ENCODE measurements at regions of chr3 and their contacts with region 1.

Region 1: DNA sequence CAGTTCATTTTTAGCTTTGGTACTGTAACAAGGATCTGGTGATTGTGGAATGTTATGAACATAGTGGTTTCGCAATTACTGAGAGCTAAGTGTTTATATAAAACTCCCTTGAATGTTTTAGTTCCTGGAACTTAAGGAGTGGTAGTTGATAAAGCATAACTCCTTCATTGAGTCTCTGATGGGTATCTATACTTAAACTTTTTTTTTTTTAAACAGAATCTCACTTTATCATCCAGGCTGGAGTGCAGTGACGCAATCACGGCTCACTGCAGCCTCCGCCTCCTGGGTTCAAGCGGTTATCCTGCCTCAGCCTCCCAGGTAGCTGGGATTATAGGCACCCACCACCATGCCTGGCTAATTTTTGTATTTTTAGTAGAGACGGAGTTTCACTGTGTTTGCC is 11.3 kb downstream of the PRKCI start:
- DNase-seq: peak; percentile 54
- H3K4me3 Mint-ChIP-seq: no peak overlapping the region
- H3K27ac Mint-ChIP-seq: peak overlapping the region; percentile 86
- H3K4me1 Mint-ChIP-seq: peaks cover 7% of the 10 kb centered on the region
- H3K27me3 Mint-ChIP-seq: no peaks in the 10 kb centered on the region
- CTCF ChIP-seq: no peak

Region 2: DNA sequence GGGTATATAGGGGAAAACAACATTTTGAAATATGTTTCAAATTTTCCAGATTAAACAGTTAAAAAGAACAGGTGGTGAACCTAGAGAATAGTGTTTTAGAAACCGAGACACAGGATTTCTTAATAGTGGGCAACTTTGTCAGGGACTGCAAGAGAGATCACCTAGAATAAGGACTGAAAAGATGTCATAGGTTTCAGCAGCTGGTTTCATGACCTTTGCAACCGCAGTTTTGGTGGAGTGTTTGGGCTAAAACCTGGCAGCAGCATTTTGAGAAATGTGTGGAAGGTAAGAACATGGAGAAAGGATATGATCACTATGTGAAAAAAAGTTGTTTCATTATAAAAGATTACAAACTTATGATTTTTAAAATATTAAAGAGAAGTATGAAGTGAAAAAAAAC is 23.6 kb after region 1 on chr3:
- CTCF ChIA-PET with region 1: interaction called, 5 read pairs
- POLR2A ChIA-PET with region 1: interaction called, 18 read pairs
- intact Hi-C with region 1: no loop called
- DNase-seq: no peak
- H3K4me3 Mint-ChIP-seq: no peak overlapping the region
- H3K27ac Mint-ChIP-seq: no peak overlapping the region
- H3K4me1 Mint-ChIP-seq: peaks cover 14% of the 10 kb centered on the region
- H3K27me3 Mint-ChIP-seq: no peaks in the 10 kb centered on the region
- CTCF ChIP-seq: no peak

Region 3: DNA sequence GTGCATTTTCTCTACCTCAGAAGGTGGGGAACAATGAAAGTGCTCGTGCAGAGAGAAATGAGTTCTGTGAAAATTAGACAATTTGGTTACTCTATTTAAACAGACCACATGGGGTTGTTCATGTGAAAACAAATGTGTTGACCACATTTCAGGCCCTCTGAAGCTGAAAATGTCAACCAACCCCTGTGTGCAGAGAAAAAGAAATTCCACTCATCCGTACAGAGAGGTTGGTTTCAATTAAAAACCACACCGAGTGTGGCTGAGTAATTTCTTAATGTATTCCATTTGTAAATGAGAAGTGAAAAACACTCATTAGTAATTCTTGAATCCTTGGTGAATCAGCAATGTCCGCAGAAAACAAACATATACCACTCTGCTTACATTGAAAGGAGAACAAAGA is 399.2 kb after region 1 on chr3:
- CTCF ChIA-PET with region 1: no interaction called
- POLR2A ChIA-PET with region 1: no interaction called
- intact Hi-C with region 1: no loop called
- DNase-seq: no peak
- H3K4me3 Mint-ChIP-seq: no peak overlapping the region
- H3K27ac Mint-ChIP-seq: no peak overlapping the region
- H3K4me1 Mint-ChIP-seq: no peaks in the 10 kb centered on the region
- H3K27me3 Mint-ChIP-seq: no peaks in the 10 kb centered on the region
- CTCF ChIP-seq: no peak

Region 4: GRCh38 chr3:171077261-171077660 is 843.7 kb after region 1 on chr3:
- CTCF ChIA-PET with region 1: no interaction called
- POLR2A ChIA-PET with region 1: no interaction called
- intact Hi-C with region 1: no loop called
- DNase-seq: no peak
- H3K4me3 Mint-ChIP-seq: no peak overlapping the region
- H3K27ac Mint-ChIP-seq: no peak overlapping the region
- H3K4me1 Mint-ChIP-seq: no peaks in the 10 kb centered on the region
- H3K27me3 Mint-ChIP-seq: no peaks in the 10 kb centered on the region
- CTCF ChIP-seq: no peak